ENCODE measurements at regions of chr1 and their contacts with region 1.

Region 1: DNA sequence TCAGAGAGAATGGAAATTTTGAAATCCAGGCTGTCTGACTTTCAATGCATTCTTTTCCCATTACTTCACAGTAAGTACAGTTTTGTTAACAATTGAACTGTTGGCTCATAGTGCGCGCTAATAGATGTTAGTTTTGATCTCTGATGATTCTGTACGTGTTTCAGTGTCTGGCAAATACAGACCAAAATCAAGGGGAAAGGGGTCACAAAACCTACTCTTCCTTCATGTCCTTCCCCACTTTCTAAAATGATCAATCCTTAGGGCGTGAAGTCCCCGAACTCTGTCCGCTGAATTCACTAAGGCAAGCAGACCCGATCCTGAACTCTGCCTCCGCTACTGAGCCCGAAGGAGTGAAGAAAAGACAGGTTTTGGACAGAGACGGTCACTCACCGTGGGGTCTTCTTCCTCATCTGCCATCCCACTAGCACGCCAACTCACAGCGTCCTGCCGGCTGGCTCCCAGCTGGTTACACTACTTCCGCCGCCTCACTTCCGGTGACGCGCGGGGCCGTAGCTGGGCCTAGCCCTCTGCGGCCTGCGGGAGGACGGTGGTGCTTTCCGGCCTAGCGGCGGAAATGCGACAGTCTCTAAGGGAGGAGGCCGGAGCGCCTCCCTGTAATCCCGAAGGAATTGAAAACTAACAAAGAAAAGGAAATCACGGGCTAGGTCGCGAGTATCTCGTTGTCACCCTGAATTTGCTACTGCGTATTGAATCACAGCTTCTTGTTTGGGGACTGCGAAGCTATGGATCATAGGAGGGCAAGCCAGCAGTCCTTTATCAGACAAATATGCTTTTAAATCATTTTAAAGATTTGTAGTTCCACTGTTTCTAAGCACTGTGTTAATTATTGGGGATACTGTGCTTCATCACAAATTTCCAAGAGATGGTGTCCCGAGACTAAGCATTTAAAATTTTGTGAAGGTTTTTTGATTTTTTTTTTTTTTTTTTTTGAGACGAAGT is at the start of gene TAF13:
- DNase-seq: peak; percentile 93
- H3K4me3 Mint-ChIP-seq: peak within 1 kb of the TSS; percentile 99
- H3K27ac Mint-ChIP-seq: peak within 1 kb of the TSS; percentile 97
- H3K4me1 Mint-ChIP-seq: peaks cover 26% of the 10 kb centered on the region
- H3K27me3 Mint-ChIP-seq: no peaks in the 10 kb centered on the region

Region 2: GRCh38 chr1:109099938-109100773 is 24.3 kb after region 1 on chr1:
- CTCF ChIA-PET with region 1: interaction called, 12 read pairs
- DNase-seq: peak; percentile 98
- H3K4me3 Mint-ChIP-seq: peak overlapping the region; percentile 92
- H3K27ac Mint-ChIP-seq: peak overlapping the region; percentile 92
- H3K4me1 Mint-ChIP-seq: peaks cover 18% of the 10 kb centered on the region
- H3K27me3 Mint-ChIP-seq: peaks cover 4% of the 10 kb centered on the region

Measured in activated naive CD4-positive, alpha-beta T cell treated with anti-CD3 and anti-CD28 coated beads, Interleukin-2, amount 10 ng/mL, durations not matched to agents 7 days and 5 days (primary cell).